ENCODE measurements at regions of chr10 and their contacts with region 1.

Region 1: DNA sequence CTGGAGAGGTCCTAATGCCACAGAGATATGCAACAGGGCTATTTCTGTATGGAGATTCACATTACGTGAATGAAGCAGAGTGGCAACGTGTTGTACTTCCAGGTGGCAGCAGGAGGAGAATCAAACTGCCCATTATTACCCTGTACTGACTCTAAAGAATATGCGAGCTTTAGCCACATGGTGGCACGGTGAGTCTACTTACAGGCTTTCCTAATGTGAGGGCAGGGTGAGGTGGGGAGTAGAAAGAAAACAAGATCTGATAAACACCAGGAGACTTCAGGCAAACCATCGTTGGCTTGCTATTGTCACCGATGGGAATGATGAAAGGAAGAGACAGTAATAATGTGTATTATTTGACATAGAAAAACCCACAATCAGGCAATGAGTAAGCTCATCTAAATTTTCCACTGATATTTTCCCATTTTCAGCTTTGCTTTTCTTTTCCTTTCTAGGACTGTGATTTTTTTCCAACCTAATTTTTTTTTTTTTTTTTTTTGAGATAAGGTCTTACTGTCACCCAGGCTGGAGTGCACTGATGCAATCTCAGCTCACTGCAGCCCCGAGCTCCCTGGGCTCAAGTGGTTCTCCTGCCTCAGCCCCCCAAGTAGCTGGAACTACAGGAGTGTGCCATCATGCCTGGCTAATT is 164.3 kb downstream of the BTAF1 start:
- DNase-seq: peak; percentile 91

Region 2: DNA sequence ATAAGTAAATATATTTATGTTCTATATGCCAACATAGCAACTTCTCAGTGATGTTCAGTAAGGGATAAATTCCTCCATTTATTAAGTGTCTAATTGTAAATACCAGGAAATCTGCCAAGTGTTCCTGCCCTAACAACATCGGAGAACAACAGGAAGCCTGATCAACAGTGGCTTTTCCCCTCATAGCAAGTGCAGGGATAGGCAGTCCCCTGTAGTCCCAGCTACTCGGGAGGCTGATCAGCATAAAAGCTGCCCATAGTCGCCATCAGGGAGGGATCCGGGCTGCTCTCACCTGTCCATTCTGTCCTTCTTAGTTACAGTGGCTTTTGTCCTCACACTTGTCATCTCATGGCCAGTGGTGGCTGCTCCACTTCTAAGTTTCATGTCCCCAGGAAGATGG is 344.7 kb after region 1 on chr10:
- in situ Hi-C with region 1: loop called (anchors 10 kb)
- DNase-seq: no peak